CD8-positive, alpha-beta T cell (primary cell): ENCODE measurements at regions of chr12 and their contacts with region 1.

Region 1: GRCh38 chr12:46744283-46744682 is 81.5 kb downstream of the SLC38A4 start:
- DNase-seq: no peak
- ATAC-seq: no peak
- H3K4me3 ChIP-seq: no peak overlapping the region
- H3K4me3 Mint-ChIP-seq: no peak overlapping the region
- H3K27ac ChIP-seq: no peak overlapping the region
- H3K27ac Mint-ChIP-seq: no peak overlapping the region
- H3K4me1 ChIP-seq: no peaks in the 10 kb centered on the region
- H3K4me1 Mint-ChIP-seq: no peaks in the 10 kb centered on the region
- H3K27me3 ChIP-seq: no peaks in the 10 kb centered on the region
- H3K27me3 Mint-ChIP-seq: peaks cover 3% of the 10 kb centered on the region
- CTCF ChIP-seq: no peak

Region 2: GRCh38 chr12:46711756-46712155 is 32.5 kb before region 1 on chr12:
- CTCF ChIA-PET with region 1: no interaction called
- POLR2A ChIA-PET with region 1: no interaction called
- intact Hi-C with region 1: loop called in 1 of 2 experiments (anchors 1 kb)
- DNase-seq: no peak
- ATAC-seq: no peak
- H3K4me3 ChIP-seq: no peak overlapping the region
- H3K4me3 Mint-ChIP-seq: no peak overlapping the region
- H3K27ac ChIP-seq: no peak overlapping the region
- H3K27ac Mint-ChIP-seq: no peak overlapping the region
- H3K4me1 ChIP-seq: no peaks in the 10 kb centered on the region
- H3K4me1 Mint-ChIP-seq: no peaks in the 10 kb centered on the region
- H3K27me3 ChIP-seq: no peaks in the 10 kb centered on the region
- H3K27me3 Mint-ChIP-seq: no peaks in the 10 kb centered on the region
- CTCF ChIP-seq: no peak